A673 (cell line): ENCODE measurements at regions of chr6 and their contacts with region 1.

Region 1: GRCh38 chr6:2942914-2943571 is 28.3 kb downstream of the SERPINB6 start:
- DNase-seq: no peak
- H3K4me3 ChIP-seq: no peak overlapping the region
- H3K27ac ChIP-seq: no peak overlapping the region
- H3K4me1 ChIP-seq: no peaks in the 10 kb centered on the region
- H3K27me3 ChIP-seq: no peaks in the 10 kb centered on the region
- CTCF ChIP-seq: no peak

Region 2: GRCh38 chr6:2209226-2209809 is 733.7 kb before region 1 on chr6:
- CTCF ChIA-PET with region 1: no interaction called
- POLR2A ChIA-PET with region 1: interaction called, 11 read pairs
- intact Hi-C with region 1: no loop called
- DNase-seq: peak; percentile 14
- H3K4me3 ChIP-seq: no peak overlapping the region
- H3K27ac ChIP-seq: no peak overlapping the region
- H3K4me1 ChIP-seq: peaks cover 6% of the 10 kb centered on the region
- H3K27me3 ChIP-seq: no peaks in the 10 kb centered on the region
- CTCF ChIP-seq: peak; percentile 52